ENCODE measurements at regions of chr4 and their contacts with region 1.

Region 1: GRCh38 chr4:155529272-155529671 is 137.4 kb upstream of the GUCY1A1 start:
- DNase-seq: no peak
- H3K4me3 ChIP-seq: no peak overlapping the region
- H3K27ac ChIP-seq: no peak overlapping the region
- H3K4me1 ChIP-seq: no peaks in the 10 kb centered on the region
- H3K27me3 ChIP-seq: no peaks in the 10 kb centered on the region
- CTCF ChIP-seq: peak in 2 of 3 experiments; percentile 44 to 56; a peak in 3 of 4 replicates
- EP300 ChIP-seq: no peak
- POLR2A ChIP-seq: no peak
- RAD21 ChIP-seq: peak; percentile 70 to 76

Region 2: DNA sequence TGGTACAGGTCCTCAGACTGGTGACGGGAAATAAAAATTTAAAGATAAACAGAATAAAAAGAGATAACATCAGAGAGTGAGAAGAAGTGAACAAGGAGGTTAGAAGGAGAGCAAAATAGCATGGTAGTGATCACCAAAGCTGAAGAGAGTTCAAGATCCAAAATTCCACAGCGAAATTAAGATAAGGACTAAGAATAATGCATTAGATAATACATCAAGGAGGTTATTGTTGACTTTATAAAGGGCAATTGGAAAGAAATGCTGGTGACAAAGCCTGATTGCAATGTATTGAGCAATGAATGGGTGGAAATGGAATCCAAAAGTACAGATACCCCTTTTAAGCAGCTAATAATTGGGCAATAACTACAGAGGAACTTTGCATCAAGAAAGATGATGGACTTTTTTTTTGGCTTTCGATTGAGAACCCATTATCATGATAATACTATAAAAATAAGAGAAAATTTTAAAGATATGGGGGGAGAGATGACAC is 50.9 kb before region 1 on chr4:
- CTCF ChIA-PET with region 1: no interaction called
- POLR2A ChIA-PET with region 1: no interaction called
- DNase-seq: no peak
- H3K4me3 ChIP-seq: no peak overlapping the region
- H3K27ac ChIP-seq: no peak overlapping the region
- H3K4me1 ChIP-seq: no peaks in the 10 kb centered on the region
- H3K27me3 ChIP-seq: no peaks in the 10 kb centered on the region
- CTCF ChIP-seq: no peak
- EP300 ChIP-seq: no peak
- POLR2A ChIP-seq: no peak
- RAD21 ChIP-seq: no peak

Region 3: GRCh38 chr4:155543126-155543765 is 14.0 kb after region 1 on chr4:
- CTCF ChIA-PET with region 1: interaction called, 13 read pairs
- POLR2A ChIA-PET with region 1: no interaction called
- DNase-seq: no peak
- H3K4me3 ChIP-seq: no peak overlapping the region
- H3K27ac ChIP-seq: no peak overlapping the region
- H3K4me1 ChIP-seq: no peaks in the 10 kb centered on the region
- H3K27me3 ChIP-seq: no peaks in the 10 kb centered on the region
- CTCF ChIP-seq: no peak
- EP300 ChIP-seq: no peak
- POLR2A ChIP-seq: no peak
- RAD21 ChIP-seq: no peak

Region 4: GRCh38 chr4:155693015-155693663 is 163.9 kb after region 1 on chr4:
- CTCF ChIA-PET with region 1: no interaction called
- POLR2A ChIA-PET with region 1: no interaction called
- DNase-seq: no peak
- H3K4me3 ChIP-seq: no peak overlapping the region
- H3K27ac ChIP-seq: no peak overlapping the region
- H3K4me1 ChIP-seq: no peaks in the 10 kb centered on the region
- H3K27me3 ChIP-seq: no peaks in the 10 kb centered on the region
- CTCF ChIP-seq: no peak
- EP300 ChIP-seq: no peak
- POLR2A ChIP-seq: no peak
- RAD21 ChIP-seq: no peak